Sciatic nerve (tissue), 2 donors: ENCODE measurements at regions of chr19 and their contacts with region 1.

Region 1: GRCh38 chr19:33933931-33934330 is 137.3 kb downstream of the KCTD15 start:
- DNase-seq: no peak
- ATAC-seq: no peak

Region 2: GRCh38 chr19:33612928-33613619 is 320.9 kb before region 1 on chr19:
- intact Hi-C with region 1: loop called (anchors 5 kb)
- DNase-seq: no peak
- ATAC-seq: no peak

Region 3: GRCh38 chr19:33947265-33947964 is 13.5 kb after region 1 on chr19:
- intact Hi-C with region 1: no loop called
- DNase-seq: no peak
- ATAC-seq: no peak